ENCODE measurements at regions of chr4 and their contacts with region 1.

Region 1: DNA sequence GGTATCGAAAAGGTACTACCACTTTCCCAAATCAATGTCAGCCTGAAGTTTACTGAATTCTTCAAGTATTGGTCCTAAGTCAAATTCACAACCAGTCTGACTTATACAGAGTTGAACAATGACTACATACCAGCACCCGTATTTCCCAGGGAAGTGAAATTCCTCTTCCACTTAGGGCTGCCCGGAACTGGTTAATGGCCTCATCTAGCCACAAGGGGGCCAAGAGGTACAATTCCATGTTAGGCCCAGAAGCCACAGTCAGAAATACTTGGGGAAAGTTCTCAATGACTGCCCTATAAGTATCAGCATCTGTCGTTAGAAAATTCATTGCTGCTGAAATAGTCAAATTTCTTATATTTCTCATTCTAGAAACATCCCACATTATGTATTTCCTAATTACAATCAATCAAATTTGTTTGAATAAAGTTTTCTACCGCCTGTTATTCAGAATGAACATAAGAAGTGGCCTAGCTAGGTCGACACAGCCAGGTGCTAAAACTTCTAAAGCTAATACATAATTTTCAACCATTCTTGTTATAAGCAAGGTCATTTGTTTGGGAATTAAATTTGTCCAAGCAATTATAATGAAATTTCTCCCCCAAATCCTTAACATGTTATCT is 5.7 kb upstream of the PCDH7 start:
- DNase-seq: peak; percentile 58
- H3K27ac ChIP-seq: no peak overlapping the region
- CTCF ChIP-seq: peak; percentile 79

Region 2: GRCh38 chr4:31124008-31124585 is 409.6 kb after region 1 on chr4:
- CTCF ChIA-PET with region 1: interaction called, 11 read pairs
- POLR2A ChIA-PET with region 1: no interaction called
- DNase-seq: no peak
- H3K27ac ChIP-seq: no peak overlapping the region
- CTCF ChIP-seq: no peak

Measured in RWPE1 (cell line).